ENCODE measurements at regions of chr19 and their contacts with region 1.

Region 1: DNA sequence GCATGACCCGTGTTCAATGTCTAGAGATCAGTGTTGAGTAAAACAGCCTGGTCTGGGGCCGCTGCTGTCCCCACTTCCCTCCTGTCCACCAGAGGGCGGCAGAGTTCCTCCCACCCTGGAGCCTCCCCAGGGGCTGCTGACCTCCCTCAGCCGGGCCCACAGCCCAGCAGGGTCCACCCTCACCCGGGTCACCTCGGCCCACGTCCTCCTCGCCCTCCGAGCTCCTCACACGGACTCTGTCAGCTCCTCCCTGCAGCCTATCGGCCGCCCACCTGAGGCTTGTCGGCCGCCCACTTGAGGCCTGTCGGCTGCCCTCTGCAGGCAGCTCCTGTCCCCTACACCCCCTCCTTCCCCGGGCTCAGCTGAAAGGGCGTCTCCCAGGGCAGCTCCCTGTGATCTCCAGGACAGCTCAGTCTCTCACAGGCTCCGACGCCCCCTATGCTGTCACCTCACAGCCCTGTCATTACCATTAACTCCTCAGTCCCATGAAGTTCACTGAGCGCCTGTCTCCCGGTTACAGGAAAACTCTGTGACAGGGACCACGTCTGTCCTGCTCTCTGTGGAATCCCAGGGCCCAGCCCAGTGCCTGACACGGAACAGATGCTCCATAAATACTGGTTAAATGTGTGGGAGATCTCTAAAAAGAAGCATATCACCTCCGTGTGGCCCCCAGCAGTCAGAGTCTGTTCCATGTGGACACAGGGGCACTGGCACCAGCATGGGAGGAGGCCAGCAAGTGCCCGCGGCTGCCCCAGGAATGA is 1.5 kb upstream of the CEACAM5 start:
- DNase-seq: peak; percentile 71
- ATAC-seq: peak; percentile 93
- H3K4me3 ChIP-seq: peak overlapping the region; percentile 63
- H3K27ac ChIP-seq: no peak overlapping the region
- H3K4me1 ChIP-seq: peaks cover 5% of the 10 kb centered on the region; the same call in 1 of the 2 replicates
- H3K27me3 ChIP-seq: no peaks in the 10 kb centered on the region
- CTCF ChIP-seq: peak; percentile 97

Region 2: DNA sequence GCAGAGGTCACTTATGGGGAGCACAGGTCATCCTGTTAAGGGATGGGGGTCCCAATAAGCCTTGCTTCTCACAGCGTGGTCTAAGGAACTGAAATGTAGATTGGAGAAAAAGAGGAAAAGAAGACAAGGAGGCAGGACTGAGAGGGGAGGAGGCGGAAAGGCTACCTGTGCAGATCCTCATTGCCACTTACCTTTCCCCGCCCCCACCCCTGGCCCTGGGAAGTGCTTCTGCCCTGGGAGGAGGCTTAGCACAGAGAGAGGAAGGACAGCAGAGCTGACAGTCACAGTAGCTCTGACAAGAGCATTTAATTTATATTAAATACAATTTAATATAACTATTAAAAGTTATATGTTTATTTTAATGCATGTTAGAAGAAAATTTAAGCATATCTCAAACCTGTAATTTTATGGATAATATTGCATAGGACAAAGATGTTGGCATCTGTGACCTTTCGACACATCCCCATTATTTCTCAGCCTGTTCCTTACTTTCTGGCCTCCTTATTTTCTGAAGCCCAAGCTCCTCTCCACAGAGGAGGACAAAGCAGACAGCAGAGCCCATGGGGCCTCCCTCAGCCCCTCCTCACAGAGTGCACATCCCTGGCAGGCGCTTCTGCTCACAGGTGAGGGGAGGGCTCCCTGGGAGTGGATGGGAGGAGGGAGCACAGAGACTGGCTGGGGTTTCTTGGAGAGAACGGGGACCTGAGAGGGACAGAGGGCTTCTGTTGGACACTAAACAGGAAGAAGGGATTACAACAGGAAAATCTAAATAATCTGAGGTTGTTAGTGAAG is 107.5 kb before region 1 on chr19:
- CTCF ChIA-PET with region 1: no interaction called
- POLR2A ChIA-PET with region 1: no interaction called
- intact Hi-C with region 1: no loop called
- DNase-seq: no peak
- ATAC-seq: no peak
- H3K4me3 ChIP-seq: no peak overlapping the region
- H3K27ac ChIP-seq: no peak overlapping the region
- H3K4me1 ChIP-seq: no peaks in the 10 kb centered on the region
- H3K27me3 ChIP-seq: peaks cover 11% of the 10 kb centered on the region
- CTCF ChIP-seq: no peak

Region 3: GRCh38 chr19:41691268-41691970 is 15.5 kb before region 1 on chr19:
- CTCF ChIA-PET with region 1: no interaction called
- POLR2A ChIA-PET with region 1: no interaction called
- intact Hi-C with region 1: no loop called
- DNase-seq: peak; percentile 27
- ATAC-seq: no peak
- H3K4me3 ChIP-seq: no peak overlapping the region
- H3K27ac ChIP-seq: no peak overlapping the region
- H3K4me1 ChIP-seq: no peaks in the 10 kb centered on the region
- H3K27me3 ChIP-seq: no peaks in the 10 kb centered on the region
- CTCF ChIP-seq: peak; percentile 71

Region 4: DNA sequence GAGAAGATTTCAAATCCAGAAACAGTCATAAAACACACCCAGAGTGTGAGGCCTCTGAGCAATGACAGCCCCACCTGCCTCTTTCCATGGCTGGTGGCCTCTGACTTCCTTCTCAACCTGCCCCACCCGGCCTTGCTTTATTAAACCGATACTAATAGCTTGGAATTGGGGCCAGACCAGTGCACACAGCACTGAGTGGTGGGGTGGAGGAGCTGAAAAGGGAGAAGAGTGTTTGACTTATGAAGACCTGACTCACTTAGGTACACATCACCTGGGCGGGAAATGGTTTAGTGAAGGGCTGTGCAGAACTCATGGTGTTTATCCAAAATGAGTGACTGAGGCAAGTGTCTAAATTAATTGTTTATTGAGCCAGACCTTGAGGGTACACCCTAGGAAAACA is 27.7 kb after region 1 on chr19:
- CTCF ChIA-PET with region 1: interaction called, 16 read pairs
- POLR2A ChIA-PET with region 1: no interaction called
- intact Hi-C with region 1: no loop called
- DNase-seq: peak; percentile 87
- ATAC-seq: peak; percentile 88
- H3K4me3 ChIP-seq: peak overlapping the region; percentile 56; the same call in 1 of the 2 replicates
- H3K27ac ChIP-seq: peak overlapping the region; percentile 100
- H3K4me1 ChIP-seq: peaks cover 42% of the 10 kb centered on the region
- H3K27me3 ChIP-seq: no peaks in the 10 kb centered on the region
- CTCF ChIP-seq: no peak